T-cell (primary cell): ENCODE measurements at regions of chr5 and their contacts with region 1.

Region 1: GRCh38 chr5:135511761-135512575 is 23.8 kb downstream of the NEUROG1 start:
- DNase-seq: no peak
- ATAC-seq: no peak
- H3K4me3 ChIP-seq: no peak overlapping the region
- H3K4me3 Mint-ChIP-seq: no peak overlapping the region
- H3K27ac ChIP-seq: no peak overlapping the region
- H3K27ac Mint-ChIP-seq: no peak overlapping the region
- H3K4me1 ChIP-seq: no peaks in the 10 kb centered on the region
- H3K4me1 Mint-ChIP-seq: peaks cover 0 to 10% (median 6%) of the 10 kb centered on the region in 3 donors
- H3K27me3 ChIP-seq: peaks cover 10 to 18% of the 10 kb centered on the region in 2 experiments
- H3K27me3 Mint-ChIP-seq: peaks cover 24 to 25% of the 10 kb centered on the region in 2 donors

Region 2: DNA sequence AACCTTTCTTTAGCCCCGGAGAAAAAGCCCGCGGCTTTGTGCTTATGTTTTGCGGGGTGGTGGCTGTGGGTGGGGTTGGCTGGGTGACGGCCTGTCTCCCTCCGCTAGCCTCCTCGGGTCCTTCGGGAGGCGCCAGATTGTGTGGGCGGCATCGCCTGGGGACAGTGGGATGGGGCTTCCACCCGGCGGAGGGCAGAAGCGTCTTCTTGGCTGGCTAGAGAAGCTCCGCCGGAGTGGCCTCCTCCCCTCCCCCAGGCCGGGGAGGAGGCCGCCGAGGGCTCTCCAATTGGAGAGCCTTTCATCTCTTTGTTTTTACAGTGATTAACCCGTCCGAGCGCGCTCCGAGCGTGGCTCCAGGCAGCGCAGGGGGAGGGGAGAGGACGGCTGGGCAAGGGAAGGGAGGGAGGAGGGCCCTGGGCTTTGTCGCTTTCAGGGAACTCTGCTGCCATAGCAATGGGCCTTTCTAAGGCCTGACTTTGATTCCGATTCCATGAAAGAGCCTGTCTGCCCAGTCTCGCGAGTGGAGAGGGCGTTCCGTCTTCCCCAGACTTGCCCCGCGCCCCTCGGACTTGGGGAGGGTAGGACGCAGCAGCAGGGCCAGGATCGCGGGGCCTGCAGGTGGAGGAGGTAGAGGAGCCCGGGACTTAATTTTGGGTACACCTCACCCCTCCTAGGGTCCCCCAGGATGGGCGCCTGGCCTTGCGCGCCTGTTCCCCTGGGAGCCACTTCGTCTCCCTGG is 23.1 kb before region 1 on chr5:
- CTCF ChIA-PET with region 1: no interaction called
- POLR2A ChIA-PET with region 1: no interaction called
- DNase-seq: no peak
- ATAC-seq: no peak
- H3K4me3 ChIP-seq: no peak overlapping the region
- H3K4me3 Mint-ChIP-seq: no peak overlapping the region
- H3K27ac ChIP-seq: no peak overlapping the region
- H3K27ac Mint-ChIP-seq: no peak overlapping the region
- H3K4me1 ChIP-seq: peaks cover 0 to 2% of the 10 kb centered on the region in 2 experiments
- H3K4me1 Mint-ChIP-seq: peaks cover 8 to 13% (median 10%) of the 10 kb centered on the region in 3 donors
- H3K27me3 ChIP-seq: peaks cover 13 to 83% of the 10 kb centered on the region in 2 experiments
- H3K27me3 Mint-ChIP-seq: peaks cover 59 to 85% of the 10 kb centered on the region in 2 donors

Region 3: DNA sequence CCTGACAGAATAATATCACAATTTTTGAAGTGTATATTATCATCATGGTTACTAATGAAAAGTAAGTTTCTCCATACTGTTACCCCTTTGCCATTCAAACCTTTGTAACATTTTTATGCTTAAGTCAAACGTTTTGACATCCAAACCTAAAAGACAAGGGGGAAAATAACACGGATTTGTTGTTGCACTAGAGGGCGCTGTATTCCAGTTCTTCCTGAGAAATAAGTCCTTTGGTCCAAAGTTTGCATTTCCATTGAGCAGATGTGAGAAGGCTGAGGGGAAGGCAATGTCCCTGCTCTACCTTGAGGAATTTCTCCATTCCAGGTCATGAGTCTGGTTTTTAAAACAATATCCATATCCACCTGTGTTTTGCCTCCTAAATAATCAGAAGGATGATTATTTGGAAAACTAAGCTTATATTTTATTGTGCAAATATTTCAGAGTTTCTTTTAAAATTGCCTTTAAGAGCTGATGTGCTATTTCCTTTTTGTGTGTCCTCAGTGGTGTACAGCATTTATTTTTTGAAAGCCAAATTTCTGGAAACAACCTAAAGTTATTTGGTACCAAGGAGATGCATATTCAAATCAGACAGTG is 433.1 kb after region 1 on chr5:
- CTCF ChIA-PET with region 1: no interaction called
- POLR2A ChIA-PET with region 1: no interaction called
- DNase-seq: peak in 15 of 35 experiments; percentile 1 to 66 (median 4)
- ATAC-seq: no peak
- H3K4me3 ChIP-seq: no peak overlapping the region
- H3K4me3 Mint-ChIP-seq: no peak overlapping the region
- H3K27ac ChIP-seq: no peak overlapping the region
- H3K27ac Mint-ChIP-seq: no peak overlapping the region
- H3K4me1 ChIP-seq: no peaks in the 10 kb centered on the region
- H3K4me1 Mint-ChIP-seq: no peaks in the 10 kb centered on the region
- H3K27me3 ChIP-seq: peaks cover 0 to 5% of the 10 kb centered on the region in 2 experiments
- H3K27me3 Mint-ChIP-seq: peaks cover 13 to 16% of the 10 kb centered on the region in 2 donors

Region 4: DNA sequence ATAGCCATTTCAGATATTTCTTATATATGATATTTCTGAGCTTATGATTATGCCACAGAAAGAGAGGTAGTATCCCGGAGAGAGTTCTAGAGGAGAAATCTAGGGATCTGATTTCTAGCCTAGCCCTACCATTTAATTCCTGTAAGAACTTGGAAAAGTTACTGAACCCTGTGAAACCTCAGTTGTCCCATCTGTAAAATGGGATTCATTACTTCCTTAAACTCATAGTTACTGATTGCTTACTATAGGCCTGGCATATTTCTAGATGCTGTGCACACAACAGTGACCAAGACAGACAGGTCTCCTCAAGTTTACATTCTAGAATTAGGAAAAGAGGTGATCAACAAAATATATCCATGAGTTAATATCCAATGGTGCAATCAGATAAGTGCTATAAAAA is 589.9 kb after region 1 on chr5:
- CTCF ChIA-PET with region 1: no interaction called
- POLR2A ChIA-PET with region 1: interaction called in 1 of 2 experiments, 15 read pairs
- DNase-seq: no peak
- ATAC-seq: no peak
- H3K4me3 ChIP-seq: no peak overlapping the region
- H3K4me3 Mint-ChIP-seq: no peak overlapping the region
- H3K27ac ChIP-seq: no peak overlapping the region
- H3K27ac Mint-ChIP-seq: no peak overlapping the region
- H3K4me1 ChIP-seq: no peaks in the 10 kb centered on the region
- H3K4me1 Mint-ChIP-seq: no peaks in the 10 kb centered on the region
- H3K27me3 ChIP-seq: peaks cover 0 to 5% of the 10 kb centered on the region in 2 experiments
- H3K27me3 Mint-ChIP-seq: peaks cover 7 to 11% of the 10 kb centered on the region in 2 donors